ENCODE measurements at regions of chr11 and their contacts with region 1.

Region 1: GRCh38 chr11:11931461-11932055 is 76.9 kb downstream of the DKK3 start:
- DNase-seq: peak; percentile 77
- ATAC-seq: peak; percentile 93
- H3K4me3 ChIP-seq: no peak overlapping the region
- H3K27ac ChIP-seq: peak overlapping the region; percentile 38
- H3K4me1 ChIP-seq: peaks cover 13% of the 10 kb centered on the region
- H3K27me3 ChIP-seq: no peaks in the 10 kb centered on the region
- CTCF ChIP-seq: peak; percentile 88

Region 2: GRCh38 chr11:11860103-11860979 is 71.2 kb before region 1 on chr11:
- CTCF ChIA-PET with region 1: no interaction called
- POLR2A ChIA-PET with region 1: no interaction called
- intact Hi-C with region 1: no loop called
- DNase-seq: peak; percentile 28
- ATAC-seq: peak; percentile 79
- H3K4me3 ChIP-seq: peak overlapping the region; percentile 27; the same call in 1 of the 2 replicates
- H3K27ac ChIP-seq: 0 out of 2 replicates have a peak overlapping the region, but pooled peaks have one; percentile 6
- H3K4me1 ChIP-seq: peaks cover 15% of the 10 kb centered on the region
- H3K27me3 ChIP-seq: no peaks in the 10 kb centered on the region
- CTCF ChIP-seq: no peak

Region 3: DNA sequence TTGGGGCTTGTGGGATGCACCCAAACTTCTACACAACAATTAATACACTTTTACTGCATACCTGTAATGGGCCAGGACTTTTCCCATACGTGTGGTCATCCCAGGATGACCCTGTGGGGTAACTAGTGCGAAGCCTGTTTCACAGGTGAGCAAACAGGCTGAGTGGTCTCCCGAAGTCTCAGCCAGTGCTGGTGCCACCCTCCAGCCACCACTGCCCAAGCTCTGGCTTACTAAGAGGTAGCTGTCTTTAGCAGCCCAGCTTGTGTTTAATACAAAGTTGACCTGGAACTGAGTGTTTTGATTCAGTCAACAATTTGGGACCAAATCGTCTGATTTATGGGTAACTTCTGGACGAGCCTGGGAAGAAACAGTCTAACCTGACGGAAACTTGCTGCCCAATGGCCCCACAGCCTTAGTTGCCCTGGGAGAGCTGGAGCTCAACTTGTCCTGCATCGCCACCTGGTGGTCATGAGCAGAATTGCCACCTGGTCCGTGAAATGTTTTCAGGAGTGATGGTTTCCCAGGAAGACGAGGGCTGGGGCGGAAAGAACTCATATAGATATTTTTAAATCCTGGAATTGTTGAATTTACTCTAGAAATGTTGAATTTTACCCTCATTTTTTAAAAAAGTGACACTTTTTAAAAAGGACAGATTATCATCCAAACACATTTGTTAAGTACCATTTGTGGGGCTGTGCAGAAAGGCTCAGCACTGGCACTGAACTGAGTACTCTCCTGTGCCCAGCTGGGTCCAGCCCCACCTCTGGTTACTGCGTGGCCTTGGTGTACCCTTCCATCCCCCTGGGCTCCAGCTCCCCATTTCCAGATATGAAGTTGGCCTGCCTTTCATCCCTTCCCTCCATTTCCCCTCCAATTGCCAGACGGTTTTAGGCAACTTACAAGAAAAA is 350.3 kb after region 1 on chr11:
- CTCF ChIA-PET with region 1: interaction called, 4 read pairs
- POLR2A ChIA-PET with region 1: no interaction called
- intact Hi-C with region 1: loop called (anchors 5 kb)
- DNase-seq: peak; percentile 87
- ATAC-seq: peak; percentile 49
- H3K4me3 ChIP-seq: no peak overlapping the region
- H3K27ac ChIP-seq: 0 out of 2 replicates have a peak overlapping the region, but pooled peaks have one; percentile 5
- H3K4me1 ChIP-seq: peaks cover 53% of the 10 kb centered on the region
- H3K27me3 ChIP-seq: no peaks in the 10 kb centered on the region
- CTCF ChIP-seq: peak; percentile 97